Aorta (tissue), 5 donors: ENCODE measurements at regions of chr13 and their contacts with region 1.

Region 1: GRCh38 chr13:83077499-83077898 is 804.8 kb downstream of the SLITRK1 start:
- DNase-seq: no peak
- ATAC-seq: no peak
- H3K4me3 ChIP-seq: no peak overlapping the region
- H3K27ac ChIP-seq: no peak overlapping the region
- H3K4me1 ChIP-seq: peaks cover 0 to 1% of the 10 kb centered on the region in 2 donors
- H3K27me3 ChIP-seq: no peaks in the 10 kb centered on the region

Region 2: DNA sequence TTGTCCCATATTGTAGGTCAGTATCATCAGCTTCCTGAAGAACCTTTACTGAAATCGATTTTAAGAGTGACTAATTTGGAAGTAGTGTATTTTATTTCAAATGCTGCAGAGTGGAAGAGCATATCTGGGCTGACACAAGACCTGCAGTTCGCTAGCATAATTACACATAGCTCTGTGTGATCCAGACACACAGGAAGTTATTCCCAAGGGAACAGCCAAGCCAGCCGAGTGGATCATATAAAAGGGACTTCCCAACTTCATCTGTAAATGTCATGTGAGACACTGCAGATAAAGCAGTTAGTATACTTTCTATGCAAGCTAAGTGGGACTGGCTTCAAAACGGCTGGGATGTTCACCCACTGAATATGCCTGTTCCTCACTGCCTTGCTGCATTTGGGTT is 44.4 kb after region 1 on chr13:
- intact Hi-C with region 1: no loop called
- DNase-seq: no peak
- ATAC-seq: no peak
- H3K4me3 ChIP-seq: no peak overlapping the region
- H3K27ac ChIP-seq: no peak overlapping the region
- H3K4me1 ChIP-seq: no peaks in the 10 kb centered on the region
- H3K27me3 ChIP-seq: no peaks in the 10 kb centered on the region

Region 3: GRCh38 chr13:83215627-83216026 is 138.1 kb after region 1 on chr13:
- intact Hi-C with region 1: loop called in 1 of 2 experiments (anchors 10 kb)
- DNase-seq: no peak
- ATAC-seq: no peak
- H3K4me3 ChIP-seq: no peak overlapping the region
- H3K27ac ChIP-seq: no peak overlapping the region
- H3K4me1 ChIP-seq: no peaks in the 10 kb centered on the region
- H3K27me3 ChIP-seq: no peaks in the 10 kb centered on the region